Psoas muscle (tissue), 8 donors: ENCODE measurements at regions of chr22 and their contacts with region 1.

Region 1: GRCh38 chr22:45994491-45995404 is 17.8 kb upstream of the WNT7B start:
- DNase-seq: peak; percentile 87 to 93
- ATAC-seq: peak; percentile 75 to 84 (median 79)
- H3K4me3 ChIP-seq: no peak overlapping the region
- H3K27ac ChIP-seq: no peak overlapping the region
- H3K4me1 ChIP-seq: peaks cover 39% of the 10 kb centered on the region
- H3K27me3 ChIP-seq: no peaks in the 10 kb centered on the region
- CTCF ChIP-seq: peak; percentile 98

Region 2: GRCh38 chr22:46027192-46028105 is 32.7 kb after region 1 on chr22:
- intact Hi-C with region 1: no loop called
- DNase-seq: peak; percentile 72 to 88
- ATAC-seq: peak; percentile 72 to 91 (median 82)
- H3K4me3 ChIP-seq: peak overlapping the region; percentile 66
- H3K27ac ChIP-seq: peak overlapping the region; percentile 72
- H3K4me1 ChIP-seq: no peaks in the 10 kb centered on the region
- H3K27me3 ChIP-seq: no peaks in the 10 kb centered on the region
- CTCF ChIP-seq: peak; percentile 17

Region 3: GRCh38 chr22:46116491-46116958 is 121.8 kb after region 1 on chr22:
- intact Hi-C with region 1: loop called (anchors 1 to 2 kb)
- DNase-seq: peak; percentile 96 to 98
- ATAC-seq: peak; percentile 76 to 84 (median 83)
- H3K4me3 ChIP-seq: no peak overlapping the region
- H3K27ac ChIP-seq: peak overlapping the region; percentile 76
- H3K4me1 ChIP-seq: peaks cover 37% of the 10 kb centered on the region
- H3K27me3 ChIP-seq: no peaks in the 10 kb centered on the region
- CTCF ChIP-seq: peak; percentile 63

Region 4: DNA sequence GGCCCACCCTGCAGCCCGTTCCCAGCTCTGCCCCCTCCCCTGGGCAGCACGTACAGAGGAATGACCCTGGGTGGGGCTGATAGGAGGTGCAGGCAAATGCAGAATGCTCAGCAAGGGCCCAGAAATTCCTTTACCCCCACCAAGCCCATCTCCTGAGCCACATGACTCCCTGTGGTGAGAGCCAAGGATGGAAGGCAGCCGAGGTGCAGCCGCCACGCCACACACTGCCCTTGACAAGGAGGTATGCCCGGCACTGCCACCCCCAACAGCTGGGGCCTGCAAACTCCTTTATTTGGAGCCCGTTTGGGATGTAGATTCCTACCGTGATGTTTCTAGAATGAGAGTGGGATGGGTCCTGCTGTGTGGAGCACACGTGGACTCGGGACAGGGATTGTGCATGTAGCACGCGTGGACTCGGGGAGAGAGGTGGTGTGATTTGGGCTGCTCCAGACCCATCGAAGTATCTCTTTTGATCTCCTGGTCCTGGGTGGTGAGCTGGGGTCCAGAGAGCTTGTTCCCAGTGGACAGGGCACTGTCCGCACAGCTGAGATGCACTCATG is 314.9 kb after region 1 on chr22:
- intact Hi-C with region 1: loop called (anchors 5 kb)
- DNase-seq: no peak
- ATAC-seq: peak in 2 of 4 donors; percentile 29 to 31
- H3K4me3 ChIP-seq: no peak overlapping the region
- H3K27ac ChIP-seq: no peak overlapping the region
- H3K4me1 ChIP-seq: no peaks in the 10 kb centered on the region
- H3K27me3 ChIP-seq: no peaks in the 10 kb centered on the region
- CTCF ChIP-seq: no peak

Region 5: DNA sequence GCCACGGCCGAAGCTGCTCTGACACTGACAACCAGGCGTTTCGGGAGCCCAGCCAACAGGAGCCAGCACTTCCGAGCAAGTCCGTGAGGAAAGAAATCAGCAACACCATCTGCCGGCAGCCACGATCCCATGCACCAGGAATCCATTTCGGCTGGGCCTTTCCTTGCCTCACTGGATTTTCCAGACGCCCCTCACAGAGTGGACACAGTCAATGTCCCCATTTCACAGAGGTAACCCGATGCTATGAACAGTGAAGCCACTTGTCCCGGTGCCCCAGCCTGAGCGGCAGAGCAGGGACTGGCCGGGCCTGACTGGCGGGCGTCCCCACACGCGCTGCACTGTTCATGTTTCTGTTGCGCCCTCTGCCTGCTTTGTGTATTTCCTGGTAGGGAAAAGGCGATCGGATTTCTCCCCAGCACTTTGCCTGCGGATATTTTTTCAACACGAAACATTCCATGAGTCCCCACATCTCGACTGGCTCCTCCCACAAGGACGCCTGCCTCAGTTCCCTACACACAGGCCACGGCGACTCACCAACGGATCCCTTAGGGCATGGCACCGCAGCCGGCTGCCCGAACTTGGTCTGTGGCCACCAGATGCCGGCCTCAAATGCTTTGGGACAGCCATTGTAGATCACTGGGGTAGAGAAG is 396.0 kb after region 1 on chr22:
- intact Hi-C with region 1: loop called in 1 of 2 experiments (anchors 5 kb)
- DNase-seq: peak; percentile 72 to 88
- ATAC-seq: peak; percentile 82 to 96 (median 88)
- H3K4me3 ChIP-seq: peak overlapping the region; percentile 55
- H3K27ac ChIP-seq: peak overlapping the region; percentile 77
- H3K4me1 ChIP-seq: no peaks in the 10 kb centered on the region
- H3K27me3 ChIP-seq: no peaks in the 10 kb centered on the region
- CTCF ChIP-seq: peak; percentile 58

Region 6: GRCh38 chr22:46542011-46542985 is 547.5 kb after region 1 on chr22:
- intact Hi-C with region 1: loop called in 1 of 2 experiments (anchors 10 kb)
- DNase-seq: peak; percentile 72 to 80
- ATAC-seq: peak; percentile 89 to 93 (median 92)
- H3K4me3 ChIP-seq: no peak overlapping the region
- H3K27ac ChIP-seq: no peak overlapping the region
- H3K4me1 ChIP-seq: peaks cover 16% of the 10 kb centered on the region
- H3K27me3 ChIP-seq: peaks cover 0 to 26% (median 12%) of the 10 kb centered on the region in 3 donors
- CTCF ChIP-seq: peak; percentile 88